HEK293T (cell line): ENCODE measurements at regions of chr7 and their contacts with region 1.

Region 1: DNA sequence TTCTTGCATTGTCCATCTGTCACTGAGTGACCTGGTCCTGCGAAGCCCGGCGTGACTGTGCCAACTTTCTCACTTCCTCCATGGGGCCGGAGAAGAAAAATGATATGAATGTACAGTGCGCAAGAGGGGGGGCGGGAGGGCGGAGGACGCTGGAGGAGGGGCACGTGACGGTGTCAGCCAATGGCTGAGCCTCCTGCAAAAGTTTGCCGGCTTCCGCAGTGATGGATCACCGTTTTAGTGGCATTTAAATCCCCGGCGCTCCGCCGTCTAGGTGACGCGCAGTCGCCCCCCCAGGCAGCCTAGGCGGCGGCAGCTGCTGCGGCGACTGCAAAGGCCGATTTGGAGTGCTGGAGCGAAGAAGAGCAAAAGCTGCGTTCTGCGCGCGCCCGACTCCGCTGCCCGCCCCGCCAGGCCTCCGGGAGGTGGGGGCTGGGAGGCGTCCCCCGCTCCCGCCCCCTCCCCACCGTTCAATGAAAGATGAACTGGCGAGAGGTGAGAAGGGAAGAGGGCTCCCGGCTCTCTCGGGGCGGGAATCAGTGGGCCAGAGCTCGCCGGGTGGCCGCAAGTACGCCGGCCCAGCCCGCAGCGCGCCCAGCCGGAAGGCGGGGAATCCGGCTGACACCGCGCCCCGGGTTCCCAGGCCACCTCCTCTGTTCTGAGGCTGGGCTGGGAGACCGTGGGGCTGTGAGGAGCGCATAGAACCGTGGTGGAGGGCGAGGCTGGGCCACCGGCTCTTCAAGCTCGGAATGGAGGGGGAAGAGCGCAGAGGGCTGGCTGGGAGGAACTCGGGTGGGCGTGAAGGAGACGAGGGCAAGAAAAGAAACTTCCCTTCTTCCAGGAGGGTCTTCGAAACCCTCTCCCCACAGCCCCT is at the start of gene HOXA1:
- DNase-seq: peak; percentile 85

Region 2: GRCh38 chr7:26864309-26865093 is 231.6 kb before region 1 on chr7 and contains the start of gene SKAP2:
- CTCF ChIA-PET with region 1: no interaction called
- POLR2A ChIA-PET with region 1: interaction called, 14 read pairs
- DNase-seq: peak; percentile 97

Region 3: GRCh38 chr7:26989897-26990670 is 106.0 kb before region 1 on chr7:
- CTCF ChIA-PET with region 1: no interaction called
- POLR2A ChIA-PET with region 1: no interaction called
- DNase-seq: no peak

Region 4: DNA sequence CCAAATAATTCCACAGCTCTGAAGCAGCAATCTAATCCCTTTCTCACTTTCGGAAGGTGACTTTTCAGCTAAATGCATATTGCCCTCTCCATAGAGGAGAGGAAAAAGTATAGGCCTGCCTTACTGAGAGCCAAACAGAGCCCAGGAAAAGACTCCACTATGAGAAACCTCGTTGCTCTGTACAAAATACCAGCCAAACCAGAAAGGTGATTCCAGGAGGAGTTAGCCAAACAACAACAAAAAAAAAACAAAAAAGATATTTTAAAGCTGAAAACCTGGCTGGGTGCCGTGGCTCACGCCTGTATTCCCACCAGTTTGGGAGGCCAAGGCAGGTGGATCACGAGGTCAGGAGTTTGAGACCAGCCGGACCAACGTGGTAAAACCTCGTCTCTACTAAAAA is 70.9 kb before region 1 on chr7:
- CTCF ChIA-PET with region 1: no interaction called
- POLR2A ChIA-PET with region 1: no interaction called
- DNase-seq: no peak

Region 5: DNA sequence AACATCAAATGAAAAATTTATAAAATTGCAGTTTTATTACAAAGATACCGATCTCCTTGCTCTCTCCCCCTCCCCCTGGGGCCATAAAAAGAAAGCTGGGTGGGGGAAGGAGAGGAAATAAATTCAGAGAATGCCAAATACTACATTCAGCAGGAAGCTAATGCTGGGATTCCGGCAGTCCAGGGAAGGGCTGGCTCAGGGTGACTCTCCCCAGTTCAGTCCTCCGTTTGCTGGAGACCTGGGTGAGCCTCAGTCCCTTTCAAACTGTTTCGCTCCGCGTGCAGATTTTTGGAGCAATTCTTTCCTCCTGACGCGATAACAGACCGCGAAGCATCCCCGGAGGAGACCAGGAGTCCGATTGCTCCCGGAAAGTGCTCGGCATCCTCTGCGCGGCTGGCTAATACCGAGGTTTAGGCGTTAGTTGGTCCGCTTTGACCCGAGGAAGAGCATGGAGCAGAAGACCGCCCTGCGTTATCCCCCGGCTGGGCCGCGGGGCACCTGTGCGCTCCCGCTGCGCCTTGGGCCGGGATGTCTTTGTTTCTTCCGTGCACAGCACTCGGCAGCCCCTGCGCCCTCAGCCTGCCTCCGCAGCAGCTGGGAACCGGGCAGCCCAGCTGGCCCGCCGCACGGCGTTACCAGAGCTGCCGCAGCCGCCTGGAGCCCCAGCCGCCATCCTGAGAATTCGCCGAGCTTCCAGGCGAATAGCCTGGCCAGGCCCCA is 10.2 kb after region 1 on chr7:
- CTCF ChIA-PET with region 1: no interaction called
- POLR2A ChIA-PET with region 1: interaction called, 16 read pairs
- DNase-seq: no peak

Region 6: GRCh38 chr7:27112955-27113949 is 17.1 kb after region 1 on chr7:
- CTCF ChIA-PET with region 1: no interaction called
- POLR2A ChIA-PET with region 1: interaction called, 31 read pairs
- DNase-seq: peak; percentile 59

Region 7: GRCh38 chr7:27130540-27131389 is 34.6 kb after region 1 on chr7 and contains the start of gene HOXA4:
- CTCF ChIA-PET with region 1: interaction called, 3 read pairs
- POLR2A ChIA-PET with region 1: interaction called, 10 read pairs
- DNase-seq: peak; percentile 78

Region 8: DNA sequence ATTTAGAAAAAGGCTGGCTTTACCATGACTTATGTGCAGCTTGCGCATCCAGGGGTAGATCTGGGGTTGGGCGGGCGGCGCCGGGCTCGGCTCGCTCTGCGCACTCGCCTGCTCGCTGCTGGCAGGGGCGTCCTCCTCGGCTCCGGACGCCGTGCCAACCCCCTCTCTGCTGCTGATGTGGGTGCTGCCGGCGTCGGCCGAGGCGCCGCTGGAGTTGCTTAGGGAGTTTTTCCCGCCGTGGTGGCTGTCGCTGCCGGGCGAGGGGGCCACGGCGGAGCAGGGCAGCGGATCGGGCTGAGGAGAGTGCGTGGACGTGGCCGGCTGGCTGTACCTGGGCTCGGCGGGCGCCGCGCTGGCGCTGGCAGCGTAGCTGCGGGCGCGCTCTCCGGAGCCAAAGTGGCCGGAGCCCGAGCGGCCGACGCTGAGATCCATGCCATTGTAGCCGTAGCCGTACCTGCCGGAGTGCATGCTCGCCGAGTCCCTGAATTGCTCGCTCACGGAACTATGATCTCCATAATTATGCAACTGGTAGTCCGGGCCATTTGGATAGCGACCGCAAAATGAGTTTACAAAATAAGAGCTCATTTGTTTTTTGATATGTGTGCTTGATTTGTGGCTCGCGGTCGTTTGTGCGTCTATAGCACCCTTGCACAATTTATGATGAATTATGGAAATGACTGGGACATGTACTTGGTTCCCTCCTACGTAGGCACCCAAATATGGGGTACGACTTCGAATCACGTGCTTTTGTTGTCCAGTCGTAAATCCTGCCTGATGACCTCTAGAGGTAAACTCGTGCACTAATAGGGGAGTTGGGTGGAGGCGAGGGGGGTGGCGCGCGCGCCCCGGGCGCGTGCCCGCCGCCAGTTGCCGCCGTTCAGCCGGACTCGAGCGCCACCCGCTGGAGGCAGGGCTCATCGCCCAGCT is 47.2 kb after region 1 on chr7 and contains the start of gene HOXA5:
- CTCF ChIA-PET with region 1: interaction called, 4 read pairs
- POLR2A ChIA-PET with region 1: interaction called, 10 read pairs
- DNase-seq: peak; percentile 79